GM12878 (cell line): ENCODE measurements at regions of chr11 and their contacts with region 1.

Region 1: GRCh38 chr11:61332797-61333549 is at the starts of genes DDB1 and TKFC:
- DNase-seq: peak; percentile 64
- ATAC-seq: peak; percentile 94
- H3K4me3 ChIP-seq: peak within 1 kb of the TSS; percentile 90
- H3K27ac ChIP-seq: peak within 1 kb of the TSS; percentile 92
- H3K4me1 ChIP-seq: peaks cover 20% of the 10 kb centered on the region
- H3K27me3 ChIP-seq: no peaks in the 10 kb centered on the region
- CTCF ChIP-seq: no peak
- EP300 ChIP-seq: no peak
- POLR2A ChIP-seq: peak; percentile 98
- RAD21 ChIP-seq: no peak
- polyA plus RNA-seq, gene DDB1: 136 to 211 TPM
- polyA plus RNA-seq, gene TKFC: 2.4 to 5.5 TPM

Region 2: GRCh38 chr11:60951899-60952741 is 380.9 kb before region 1 on chr11 and contains the start of gene SLC15A3:
- CTCF ChIA-PET with region 1: no interaction called
- POLR2A ChIA-PET with region 1: interaction called, 11 read pairs
- RAD21 ChIA-PET with region 1: no interaction called
- SMC1A ChIA-PET with region 1: interaction called, 3 read pairs
- in situ Hi-C with region 1: no loop called
- intact Hi-C with region 1: no loop called
- DNase-seq: peak; percentile 61
- ATAC-seq: peak; percentile 88
- H3K4me3 ChIP-seq: peak within 1 kb of the TSS; percentile 94
- H3K27ac ChIP-seq: peak within 1 kb of the TSS; percentile 97
- H3K4me1 ChIP-seq: peaks cover 28% of the 10 kb centered on the region
- H3K27me3 ChIP-seq: no peaks in the 10 kb centered on the region
- CTCF ChIP-seq: no peak
- EP300 ChIP-seq: 0 out of 4 replicates have a peak, but pooled peaks of 1 of the 2 experiments have one; percentile 23
- POLR2A ChIP-seq: peak; percentile 85
- RAD21 ChIP-seq: no peak
- polyA plus RNA-seq, gene SLC15A3: 17.7 to 55.4 TPM

Region 3: GRCh38 chr11:61102667-61103571 is 230.1 kb before region 1 on chr11:
- CTCF ChIA-PET with region 1: no interaction called
- POLR2A ChIA-PET with region 1: no interaction called
- RAD21 ChIA-PET with region 1: no interaction called
- SMC1A ChIA-PET with region 1: no interaction called
- in situ Hi-C with region 1: no loop called
- intact Hi-C with region 1: no loop called
- DNase-seq: no peak
- ATAC-seq: peak; percentile 14; the same call in 2 of the 3 replicates
- H3K4me3 ChIP-seq: no peak overlapping the region
- H3K27ac ChIP-seq: no peak overlapping the region
- H3K4me1 ChIP-seq: peaks cover 8% of the 10 kb centered on the region
- H3K27me3 ChIP-seq: no peaks in the 10 kb centered on the region
- CTCF ChIP-seq: no peak
- EP300 ChIP-seq: no peak
- POLR2A ChIP-seq: no peak
- RAD21 ChIP-seq: no peak

Region 4: DNA sequence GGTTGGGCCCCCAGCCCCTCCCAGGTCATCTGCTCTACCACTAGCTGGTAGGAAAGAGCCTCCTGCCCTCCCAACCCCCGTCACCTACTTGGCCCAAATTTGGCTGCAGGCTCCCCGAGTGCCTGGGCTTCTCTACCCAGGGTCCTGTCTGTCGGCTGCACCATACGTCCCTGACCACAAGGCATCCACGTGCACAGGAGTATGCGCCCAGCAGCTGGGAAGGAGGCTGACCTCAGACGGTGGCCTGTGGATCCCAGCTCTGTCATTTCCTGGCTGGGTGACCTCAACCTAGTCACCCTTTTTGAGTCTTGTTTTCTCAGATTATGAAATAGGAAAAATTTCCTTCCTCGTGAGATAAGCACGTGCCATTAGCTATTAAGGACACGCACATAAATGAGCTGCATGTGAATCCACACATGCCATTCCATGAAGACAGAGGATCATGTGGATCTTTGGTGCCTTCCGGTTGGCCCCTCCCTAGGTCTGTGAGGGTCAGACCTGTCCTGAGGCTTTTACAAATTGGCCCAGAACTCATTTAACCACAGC is 15.0 kb after region 1 on chr11:
- CTCF ChIA-PET with region 1: interaction called, 387 read pairs
- POLR2A ChIA-PET with region 1: interaction called, 3 read pairs
- RAD21 ChIA-PET with region 1: interaction called, 172 read pairs
- SMC1A ChIA-PET with region 1: interaction called, 243 read pairs
- in situ Hi-C with region 1: no loop called
- intact Hi-C with region 1: no loop called
- DNase-seq: no peak
- ATAC-seq: no peak
- H3K4me3 ChIP-seq: no peak overlapping the region
- H3K27ac ChIP-seq: no peak overlapping the region
- H3K4me1 ChIP-seq: no peaks in the 10 kb centered on the region
- H3K27me3 ChIP-seq: no peaks in the 10 kb centered on the region
- CTCF ChIP-seq: no peak
- EP300 ChIP-seq: no peak
- POLR2A ChIP-seq: no peak
- RAD21 ChIP-seq: no peak

Region 5: GRCh38 chr11:61369372-61370219 is 36.6 kb after region 1 on chr11:
- CTCF ChIA-PET with region 1: interaction called, 387 read pairs
- POLR2A ChIA-PET with region 1: interaction called, 8 read pairs
- RAD21 ChIA-PET with region 1: interaction called, 172 read pairs
- SMC1A ChIA-PET with region 1: interaction called, 35 read pairs
- in situ Hi-C with region 1: no loop called
- intact Hi-C with region 1: no loop called
- DNase-seq: peak; percentile 77
- ATAC-seq: peak; percentile 86
- H3K4me3 ChIP-seq: no peak overlapping the region
- H3K27ac ChIP-seq: peak overlapping the region; percentile 68
- H3K4me1 ChIP-seq: peaks cover 8% of the 10 kb centered on the region
- H3K27me3 ChIP-seq: no peaks in the 10 kb centered on the region
- CTCF ChIP-seq: no peak
- EP300 ChIP-seq: peak; percentile 92 to 93
- POLR2A ChIP-seq: peak; percentile 43; the same call in 1 of the 2 replicates
- RAD21 ChIP-seq: no peak

Region 6: DNA sequence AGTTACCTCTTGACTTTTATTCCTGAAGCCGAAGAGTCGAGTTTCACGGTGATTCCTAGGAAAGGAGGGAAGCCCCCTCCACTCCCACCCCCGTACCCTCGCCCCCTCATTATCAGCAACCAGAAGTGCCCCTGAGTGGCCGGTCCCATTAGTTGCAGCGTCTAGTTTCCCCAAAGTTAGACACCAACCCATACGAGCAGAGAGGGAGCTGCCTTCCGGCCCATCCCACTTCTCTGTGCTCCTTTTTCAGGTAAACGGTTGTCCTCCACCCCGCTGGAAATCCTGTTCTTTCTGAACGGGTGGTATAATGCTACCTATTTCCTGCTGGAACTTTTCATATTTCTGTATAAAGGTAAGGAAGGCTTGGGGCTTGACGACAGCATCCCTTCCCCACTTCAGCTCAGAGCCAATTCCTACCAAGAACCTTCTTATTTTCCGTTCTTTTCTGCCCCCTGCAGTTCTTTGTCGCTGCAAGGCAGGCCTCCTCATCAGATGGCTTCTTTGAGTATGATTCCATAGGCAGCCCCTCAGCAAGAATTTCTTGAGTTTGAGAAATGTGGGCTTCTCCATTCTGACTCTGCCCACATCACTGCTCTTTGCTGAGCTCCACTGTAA is 60.1 kb after region 1 on chr11:
- CTCF ChIA-PET with region 1: interaction called, 729 read pairs
- POLR2A ChIA-PET with region 1: interaction called, 86 read pairs
- RAD21 ChIA-PET with region 1: interaction called, 88 read pairs
- SMC1A ChIA-PET with region 1: interaction called, 414 read pairs
- in situ Hi-C with region 1: loop called (anchors 5 kb)
- intact Hi-C with region 1: loop called (anchors 2 kb)
- DNase-seq: no peak
- ATAC-seq: peak; percentile 64
- H3K4me3 ChIP-seq: peak overlapping the region; percentile 89
- H3K27ac ChIP-seq: peak overlapping the region; percentile 39; the same call in 1 of the 2 replicates
- H3K4me1 ChIP-seq: peaks cover 4% of the 10 kb centered on the region
- H3K27me3 ChIP-seq: no peaks in the 10 kb centered on the region
- CTCF ChIP-seq: peak; percentile 18 to 53 (median 26); a peak in 5 of 6 replicates
- EP300 ChIP-seq: no peak
- POLR2A ChIP-seq: no peak
- RAD21 ChIP-seq: peak; percentile 41; the same call in 1 of the 2 replicates

Region 7: DNA sequence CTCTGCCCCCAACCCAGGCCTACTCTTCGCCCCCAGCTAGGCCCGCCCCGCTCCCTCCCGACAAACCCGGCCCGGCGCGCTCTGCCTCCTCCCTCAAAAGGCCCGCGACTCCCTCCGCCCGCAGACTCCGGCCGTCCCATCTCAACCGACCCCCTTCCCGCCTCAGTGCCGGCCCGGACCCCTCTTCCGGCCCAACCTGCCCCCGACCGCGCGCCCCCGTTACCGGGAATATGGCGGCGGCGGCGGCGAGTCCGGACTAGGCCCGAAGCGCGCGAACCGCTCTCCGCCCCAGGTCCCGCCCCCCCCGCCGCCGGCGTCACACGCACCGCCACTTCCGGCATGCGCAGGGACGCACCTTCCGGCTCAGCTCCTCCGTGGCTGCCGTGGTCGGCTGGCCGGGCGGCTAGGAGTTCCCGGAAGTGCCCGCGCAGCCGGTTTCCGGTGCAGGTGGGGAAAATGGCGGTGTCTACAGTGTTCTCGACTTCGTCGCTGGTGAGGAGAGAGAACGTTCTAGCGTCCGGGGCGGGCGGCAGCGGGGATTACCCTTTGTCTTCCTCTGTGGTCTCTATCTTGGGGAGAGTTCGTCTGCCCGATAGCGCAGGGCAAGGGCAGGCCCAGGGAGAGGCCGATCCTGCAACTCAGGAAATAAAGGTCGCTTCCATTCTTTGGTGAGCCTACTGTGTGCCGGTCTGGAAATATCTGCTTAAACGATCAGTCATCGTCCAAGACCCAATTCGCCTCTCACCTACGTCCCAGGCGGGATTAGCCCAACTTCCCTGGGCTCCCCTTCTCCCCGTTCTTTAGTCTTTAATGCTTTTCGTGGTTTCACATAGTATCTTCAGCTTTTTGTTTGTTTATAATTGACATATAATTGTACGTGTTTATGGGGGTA is 97.0 kb after region 1 on chr11 and contains the starts of genes CPSF7 and SDHAF2:
- CTCF ChIA-PET with region 1: interaction called, 51 read pairs
- POLR2A ChIA-PET with region 1: interaction called, 6 read pairs
- RAD21 ChIA-PET with region 1: interaction called, 20 read pairs
- SMC1A ChIA-PET with region 1: interaction called, 19 read pairs
- in situ Hi-C with region 1: no loop called
- intact Hi-C with region 1: loop called (anchors 5 kb)
- DNase-seq: peak; percentile 69
- ATAC-seq: peak; percentile 93
- H3K4me3 ChIP-seq: peak within 1 kb of the TSS; percentile 87
- H3K27ac ChIP-seq: peak within 1 kb of the TSS; percentile 99
- H3K4me1 ChIP-seq: peaks cover 7% of the 10 kb centered on the region
- H3K27me3 ChIP-seq: no peaks in the 10 kb centered on the region
- CTCF ChIP-seq: no peak
- EP300 ChIP-seq: no peak
- POLR2A ChIP-seq: peak; percentile 93
- RAD21 ChIP-seq: no peak
- polyA plus RNA-seq, gene CPSF7: 14.9 to 21.9 TPM
- polyA plus RNA-seq, gene SDHAF2: 155 to 160 TPM